HepG2 (cell line): ENCODE measurements at regions of chr2 and their contacts with region 1.

Region 1: DNA sequence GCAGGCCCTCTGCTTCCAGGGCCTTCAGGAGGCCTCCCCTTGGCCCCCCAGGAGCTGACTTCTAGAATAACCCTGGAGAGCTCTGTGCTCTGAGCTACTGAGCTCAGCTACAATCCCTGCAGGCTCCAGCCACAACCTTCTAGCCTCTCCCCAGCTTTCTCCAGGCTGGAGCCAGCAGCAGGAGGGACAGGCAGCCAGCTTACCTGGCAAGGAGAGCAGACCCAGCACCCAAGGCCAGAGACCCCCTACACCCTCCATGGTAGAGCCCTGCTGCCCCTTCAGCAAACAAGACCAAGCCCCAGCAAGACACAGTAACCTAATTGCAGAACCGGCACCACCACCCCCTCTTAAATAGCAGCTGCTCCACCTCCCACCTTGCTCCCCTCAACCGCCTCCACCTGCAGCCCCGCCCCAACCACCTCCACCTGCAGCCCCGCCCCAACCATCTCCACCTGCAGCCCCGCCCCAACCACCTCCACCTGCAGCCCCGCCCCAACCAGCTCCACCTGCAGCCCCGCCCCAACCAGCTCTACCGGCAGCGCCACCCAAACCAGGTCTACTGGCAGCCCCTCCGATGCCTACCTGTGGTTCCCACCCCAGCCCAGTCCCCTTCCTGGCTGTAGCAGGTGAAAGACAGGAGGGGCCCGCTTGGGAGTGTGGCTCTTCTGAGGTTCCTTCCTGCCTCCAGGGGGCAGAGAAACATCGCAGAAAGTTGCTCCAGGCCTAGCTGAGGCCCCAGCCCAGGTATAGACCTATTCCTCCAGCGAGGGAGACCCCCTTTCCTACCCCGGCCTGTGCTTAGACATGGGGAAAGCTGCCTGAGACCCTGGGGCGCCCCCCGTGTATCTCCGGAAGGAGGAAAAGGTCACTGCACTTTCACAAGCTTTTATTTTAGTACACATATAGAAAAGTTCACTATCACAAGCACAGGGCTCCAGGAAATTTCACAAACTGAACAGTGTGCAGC is at the start of gene ASTL:
- DNase-seq: peak; percentile 56
- ATAC-seq: peak; percentile 84
- H3K4me3 ChIP-seq: no peak within 1 kb of the TSS
- H3K27ac ChIP-seq: no peak within 1 kb of the TSS
- H3K4me1 ChIP-seq: no peaks in the 10 kb centered on the region
- H3K27me3 ChIP-seq: peaks cover 20 to 62% of the 10 kb centered on the region in 2 experiments
- CTCF ChIP-seq: peak; percentile 87
- EP300 ChIP-seq: no peak
- POLR2A ChIP-seq: no peak
- RAD21 ChIP-seq: peak; percentile 79
- total RNA-seq, gene ASTL: not detected in 2 replicates

Region 2: GRCh38 chr2:96108541-96109360 is 29.7 kb before region 1 on chr2:
- CTCF ChIA-PET with region 1: no interaction called
- POLR2A ChIA-PET with region 1: no interaction called
- in situ Hi-C with region 1: no loop called
- intact Hi-C with region 1: no loop called
- DNase-seq: no peak
- ATAC-seq: peak; percentile 16
- H3K4me3 ChIP-seq: peak overlapping the region in 2 of 3 experiments; percentile 8 to 48; a peak in 1 of 6 replicates
- H3K27ac ChIP-seq: no peak overlapping the region
- H3K4me1 ChIP-seq: peaks cover 30% of the 10 kb centered on the region
- H3K27me3 ChIP-seq: peaks cover 2 to 3% of the 10 kb centered on the region in 2 experiments; a peak in 3 of 5 replicates
- CTCF ChIP-seq: no peak
- EP300 ChIP-seq: no peak
- POLR2A ChIP-seq: no peak
- RAD21 ChIP-seq: no peak

Region 3: DNA sequence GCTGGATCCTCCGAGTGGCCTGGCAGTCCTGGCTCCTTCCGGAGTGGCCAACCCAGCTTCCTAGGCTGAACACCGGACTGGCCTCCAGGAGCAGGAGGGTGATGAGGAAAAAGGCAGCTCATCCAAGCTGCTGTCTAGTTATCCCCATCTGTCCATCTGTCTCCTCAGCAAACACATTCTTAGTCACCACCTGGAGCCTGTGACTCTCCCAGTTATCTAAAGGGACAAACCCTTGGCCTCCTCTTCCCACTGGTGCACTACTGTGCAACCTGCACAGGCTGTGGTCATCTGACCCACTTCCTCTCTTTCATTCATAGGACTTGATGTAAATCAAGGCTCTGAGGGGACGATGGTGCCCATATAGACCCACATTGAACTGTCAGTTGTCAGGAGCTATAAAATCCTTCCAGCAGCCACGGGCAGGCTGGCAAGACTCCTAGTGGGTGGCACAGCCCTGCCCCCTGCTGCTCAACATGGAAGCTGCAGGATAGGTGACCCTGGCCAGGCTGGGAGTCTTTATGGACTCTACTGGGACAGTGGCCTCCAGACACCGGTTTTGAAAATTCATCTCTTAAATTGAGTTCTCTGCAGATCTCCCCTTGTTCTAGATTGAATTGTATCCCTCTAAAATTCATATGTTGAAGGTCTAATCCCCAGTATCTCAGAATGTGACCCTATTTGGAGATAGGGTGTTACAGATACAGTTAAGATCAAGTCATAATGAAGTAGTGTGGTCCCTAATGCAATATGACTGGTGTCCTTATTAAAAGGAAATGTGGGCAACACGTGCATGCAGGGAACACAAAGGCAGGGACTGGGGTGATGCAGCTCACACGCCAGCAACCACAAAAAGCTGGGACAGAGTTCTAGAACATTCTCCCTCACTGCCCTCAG is 36.0 kb after region 1 on chr2:
- CTCF ChIA-PET with region 1: interaction called, 33 read pairs
- POLR2A ChIA-PET with region 1: no interaction called
- in situ Hi-C with region 1: no loop called
- intact Hi-C with region 1: loop called (anchors 1 kb)
- DNase-seq: peak; percentile 71
- ATAC-seq: peak; percentile 95
- H3K4me3 ChIP-seq: no peak overlapping the region
- H3K27ac ChIP-seq: no peak overlapping the region
- H3K4me1 ChIP-seq: no peaks in the 10 kb centered on the region
- H3K27me3 ChIP-seq: peaks cover 0 to 9% of the 10 kb centered on the region in 2 experiments; a peak in 2 of 5 replicates
- CTCF ChIP-seq: peak; percentile 94
- EP300 ChIP-seq: no peak
- POLR2A ChIP-seq: no peak
- RAD21 ChIP-seq: peak; percentile 92